ENCODE measurements at regions of chr2 and their contacts with region 1.

Region 1: DNA sequence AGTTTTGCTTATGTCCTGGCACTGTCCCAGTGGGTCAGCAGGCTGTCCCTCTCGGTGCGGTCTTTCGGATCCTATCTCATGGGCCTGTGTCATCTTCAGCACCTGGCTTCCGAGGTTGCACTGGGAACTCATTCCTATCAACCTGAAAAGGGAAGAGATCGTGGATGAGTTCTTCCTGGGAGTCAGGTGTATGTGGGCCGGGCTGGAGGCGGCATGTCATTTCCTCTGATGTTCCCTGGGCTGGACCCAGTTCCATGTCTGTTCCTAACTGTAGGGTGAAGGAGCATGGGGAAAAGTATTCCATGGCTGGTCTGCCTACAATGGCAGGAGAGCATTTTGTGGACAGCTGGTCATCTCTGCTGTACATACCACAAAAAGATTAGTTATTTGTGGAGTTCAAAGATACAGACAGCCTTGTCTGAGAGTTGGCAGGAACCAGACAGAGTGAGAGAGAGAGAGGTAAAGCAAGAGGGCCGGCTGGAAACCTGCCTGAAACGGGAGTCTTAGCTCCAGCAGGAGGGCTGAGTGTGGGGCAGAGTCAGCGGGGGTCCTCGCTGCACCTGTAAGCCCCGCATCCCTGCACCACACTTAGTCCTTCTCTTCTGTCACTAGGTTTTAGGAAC is 25.2 kb downstream of the FAM228A start:
- DNase-seq: peak in 1 of 3 donors; percentile 49
- ATAC-seq: peak; percentile 40 to 52
- H3K4me3 ChIP-seq: no peak overlapping the region
- H3K27ac ChIP-seq: no peak overlapping the region
- H3K4me1 ChIP-seq: no peaks in the 10 kb centered on the region
- H3K27me3 ChIP-seq: no peaks in the 10 kb centered on the region

Region 2: DNA sequence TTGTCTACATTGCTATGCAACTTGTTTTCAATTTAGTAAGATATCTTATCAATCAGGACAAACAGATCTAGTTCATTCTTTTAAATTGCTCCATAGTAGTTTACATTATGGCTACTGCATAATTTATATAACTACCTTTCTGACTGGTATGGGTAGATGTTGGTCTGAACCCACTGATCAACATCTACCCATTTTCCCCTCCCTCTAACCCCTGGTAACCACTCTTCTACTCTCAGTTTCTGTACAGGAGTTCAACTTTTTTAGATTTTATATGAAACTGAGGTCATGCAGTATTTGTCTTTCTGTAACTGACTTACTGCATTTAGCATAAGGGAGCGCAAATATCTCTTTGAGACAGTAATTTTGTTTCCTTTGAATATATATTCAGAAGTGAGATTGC is 87.1 kb after region 1 on chr2:
- intact Hi-C with region 1: no loop called
- DNase-seq: no peak
- ATAC-seq: no peak
- H3K4me3 ChIP-seq: no peak overlapping the region
- H3K27ac ChIP-seq: no peak overlapping the region
- H3K4me1 ChIP-seq: no peaks in the 10 kb centered on the region
- H3K27me3 ChIP-seq: no peaks in the 10 kb centered on the region

Region 3: GRCh38 chr2:24351981-24352380 is 151.9 kb after region 1 on chr2:
- intact Hi-C with region 1: no loop called
- DNase-seq: no peak
- ATAC-seq: no peak
- H3K4me3 ChIP-seq: no peak overlapping the region
- H3K27ac ChIP-seq: no peak overlapping the region
- H3K4me1 ChIP-seq: peaks cover 11% of the 10 kb centered on the region
- H3K27me3 ChIP-seq: no peaks in the 10 kb centered on the region

Region 4: DNA sequence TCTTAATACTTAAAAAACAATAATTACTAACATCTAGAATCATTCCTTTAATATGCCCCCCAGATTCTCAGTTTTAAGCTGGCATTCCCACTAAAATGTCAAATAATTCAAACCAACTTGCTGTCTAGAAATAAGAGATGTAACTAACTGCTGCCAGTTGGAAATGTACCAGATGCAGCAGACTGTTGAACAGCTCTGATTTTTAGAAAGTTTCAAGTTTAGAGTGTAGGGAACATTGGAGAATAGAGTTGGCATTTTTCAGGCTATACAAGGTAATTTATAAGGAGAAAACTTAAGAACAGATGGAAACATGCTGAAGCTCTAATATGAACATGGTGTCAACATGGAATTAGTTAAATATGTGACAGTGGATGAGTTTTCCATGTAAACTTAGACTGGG is 491.7 kb after region 1 on chr2:
- intact Hi-C with region 1: loop called in 1 of 4 experiments (anchors 10 kb)
- DNase-seq: no peak
- ATAC-seq: no peak
- H3K4me3 ChIP-seq: no peak overlapping the region
- H3K27ac ChIP-seq: no peak overlapping the region
- H3K4me1 ChIP-seq: no peaks in the 10 kb centered on the region
- H3K27me3 ChIP-seq: no peaks in the 10 kb centered on the region